CD4-positive, alpha-beta memory T cell (primary cell): ENCODE measurements at regions of chr6 and their contacts with region 1.

Region 1: GRCh38 chr6:110981202-110981600 is 637 bp upstream of the RPF2 start:
- DNase-seq: peak in 2 of 5 donors; percentile 1 to 29
- H3K4me3 ChIP-seq: peak overlapping the region; percentile 20 to 95
- H3K4me3 Mint-ChIP-seq: peak overlapping the region; percentile 93 to 99 (median 98)
- H3K27ac ChIP-seq: peak overlapping the region; percentile 86
- H3K27ac Mint-ChIP-seq: peak overlapping the region; percentile 99 to 100 (median 100)
- H3K4me1 ChIP-seq: peaks cover 17% of the 10 kb centered on the region
- H3K4me1 Mint-ChIP-seq: peaks cover 28 to 49% (median 30%) of the 10 kb centered on the region in 4 donors
- H3K27me3 ChIP-seq: no peaks in the 10 kb centered on the region
- H3K27me3 Mint-ChIP-seq: no peaks in the 10 kb centered on the region

Region 2: DNA sequence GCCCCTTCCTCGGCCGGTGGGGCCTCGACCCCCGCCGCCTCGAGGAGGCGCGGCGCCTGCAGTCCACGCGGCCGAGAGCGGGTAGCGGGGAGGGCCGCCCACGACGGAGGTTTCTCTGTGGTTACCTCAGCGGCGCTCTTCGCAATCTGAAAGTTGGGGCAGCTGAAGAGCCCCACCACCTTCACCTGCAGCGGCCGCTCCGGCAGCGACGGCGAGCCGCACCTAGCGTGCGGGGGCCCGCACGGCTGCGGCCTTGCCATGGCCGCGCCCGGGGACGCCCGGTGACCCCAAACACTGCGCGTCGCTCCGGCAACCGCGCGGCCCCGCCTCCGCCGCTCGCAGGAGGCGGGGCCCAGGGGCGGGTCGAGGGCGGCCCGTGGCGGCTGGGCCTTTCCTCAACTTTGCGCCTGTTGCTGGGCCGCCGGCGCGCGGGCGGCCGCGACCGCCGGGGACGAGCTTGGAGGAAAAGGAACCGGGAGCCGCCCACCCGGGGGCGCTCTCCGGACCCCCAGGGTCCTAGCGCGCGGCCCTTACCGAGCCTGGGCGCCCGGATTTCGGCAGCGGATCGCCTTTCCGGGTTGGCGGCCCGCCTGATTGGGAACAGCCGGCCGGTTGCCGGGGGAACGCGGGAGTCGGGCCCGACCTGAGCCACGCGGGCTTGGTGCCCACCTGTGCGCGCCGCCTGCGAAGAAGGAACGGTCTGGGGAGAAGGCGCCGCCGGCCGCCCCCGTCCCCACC is 1540.7 kb before region 1 on chr6 and contains the starts of genes PPIL6 and SMPD2:
- CTCF ChIA-PET with region 1: no interaction called
- POLR2A ChIA-PET with region 1: no interaction called
- intact Hi-C with region 1: loop called (anchors 5 kb)
- DNase-seq: peak; percentile 77 to 84 (median 80)
- H3K4me3 ChIP-seq: peak within 1 kb of the TSS; percentile 69 to 82
- H3K4me3 Mint-ChIP-seq: peak within 1 kb of the TSS; percentile 91 to 98 (median 94)
- H3K27ac ChIP-seq: peak within 1 kb of the TSS; percentile 89
- H3K27ac Mint-ChIP-seq: peak within 1 kb of the TSS; percentile 96 to 98 (median 97)
- H3K4me1 ChIP-seq: peaks cover 25% of the 10 kb centered on the region
- H3K4me1 Mint-ChIP-seq: peaks cover 15 to 32% (median 21%) of the 10 kb centered on the region in 4 donors
- H3K27me3 ChIP-seq: no peaks in the 10 kb centered on the region
- H3K27me3 Mint-ChIP-seq: no peaks in the 10 kb centered on the region
- total RNA-seq, gene PPIL6: 0.39 to 0.52 TPM
- total RNA-seq, gene SMPD2: 21.7 to 23.6 TPM

Region 3: GRCh38 chr6:110179401-110180227 is 801.6 kb before region 1 on chr6 and contains the start of gene WASF1:
- CTCF ChIA-PET with region 1: no interaction called
- POLR2A ChIA-PET with region 1: interaction called, 5 read pairs
- intact Hi-C with region 1: loop called (anchors 1 kb)
- DNase-seq: peak; percentile 90 to 93 (median 92)
- H3K4me3 ChIP-seq: peak within 1 kb of the TSS; percentile 77 to 92
- H3K4me3 Mint-ChIP-seq: peak within 1 kb of the TSS; percentile 82 to 92 (median 86)
- H3K27ac ChIP-seq: peak within 1 kb of the TSS; percentile 88
- H3K27ac Mint-ChIP-seq: peak within 1 kb of the TSS; percentile 24 to 90 (median 64)
- H3K4me1 ChIP-seq: peaks cover 46% of the 10 kb centered on the region
- H3K4me1 Mint-ChIP-seq: peaks cover 5 to 7% (median 6%) of the 10 kb centered on the region in 4 donors
- H3K27me3 ChIP-seq: no peaks in the 10 kb centered on the region
- H3K27me3 Mint-ChIP-seq: peaks cover 4 to 5% of the 10 kb centered on the region in 2 donors
- total RNA-seq, gene WASF1: 0.39 to 0.70 TPM

Region 4: DNA sequence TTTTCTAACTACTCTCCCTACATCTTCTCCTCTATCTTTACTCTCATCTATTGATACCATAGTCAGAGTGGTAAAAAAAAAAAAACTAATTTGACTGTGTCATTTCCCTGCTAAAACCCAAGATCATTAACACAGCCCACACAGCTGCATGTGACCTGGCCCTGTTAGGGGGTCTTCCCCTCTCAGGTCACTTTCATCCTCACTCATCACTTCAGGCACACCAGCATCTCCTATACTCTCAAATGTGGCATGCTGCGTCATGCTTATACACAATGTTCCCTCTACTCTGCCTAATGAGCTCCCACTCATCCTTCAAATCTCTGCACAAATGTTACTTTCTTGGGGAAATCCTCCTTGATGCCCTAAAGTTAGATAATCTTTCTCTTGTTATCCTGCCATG is 252.7 kb before region 1 on chr6:
- CTCF ChIA-PET with region 1: no interaction called
- POLR2A ChIA-PET with region 1: no interaction called
- intact Hi-C with region 1: no loop called
- DNase-seq: no peak
- H3K4me3 ChIP-seq: no peak overlapping the region
- H3K4me3 Mint-ChIP-seq: no peak overlapping the region
- H3K27ac ChIP-seq: no peak overlapping the region
- H3K27ac Mint-ChIP-seq: peak overlapping the region in 1 of 7 donors; percentile 53
- H3K4me1 ChIP-seq: no peaks in the 10 kb centered on the region
- H3K4me1 Mint-ChIP-seq: peaks cover 0 to 2% (median 0%) of the 10 kb centered on the region in 4 donors
- H3K27me3 ChIP-seq: no peaks in the 10 kb centered on the region
- H3K27me3 Mint-ChIP-seq: no peaks in the 10 kb centered on the region

Region 5: GRCh38 chr6:110958329-110959192 is 22.6 kb before region 1 on chr6 and contains the start of gene GTF3C6:
- CTCF ChIA-PET with region 1: interaction called, 11 read pairs
- POLR2A ChIA-PET with region 1: interaction called, 41 read pairs
- intact Hi-C with region 1: loop called (anchors 1 kb)
- DNase-seq: peak; percentile 90 to 94 (median 92)
- H3K4me3 ChIP-seq: peak within 1 kb of the TSS; percentile 69 to 94
- H3K4me3 Mint-ChIP-seq: peak within 1 kb of the TSS; percentile 95 to 99 (median 98)
- H3K27ac ChIP-seq: peak within 1 kb of the TSS; percentile 82
- H3K27ac Mint-ChIP-seq: peak within 1 kb of the TSS; percentile 91 to 99 (median 98)
- H3K4me1 ChIP-seq: peaks cover 20% of the 10 kb centered on the region
- H3K4me1 Mint-ChIP-seq: peaks cover 11 to 26% (median 17%) of the 10 kb centered on the region in 4 donors
- H3K27me3 ChIP-seq: no peaks in the 10 kb centered on the region
- H3K27me3 Mint-ChIP-seq: no peaks in the 10 kb centered on the region
- total RNA-seq, gene GTF3C6: 28.9 to 35.7 TPM

Region 6: DNA sequence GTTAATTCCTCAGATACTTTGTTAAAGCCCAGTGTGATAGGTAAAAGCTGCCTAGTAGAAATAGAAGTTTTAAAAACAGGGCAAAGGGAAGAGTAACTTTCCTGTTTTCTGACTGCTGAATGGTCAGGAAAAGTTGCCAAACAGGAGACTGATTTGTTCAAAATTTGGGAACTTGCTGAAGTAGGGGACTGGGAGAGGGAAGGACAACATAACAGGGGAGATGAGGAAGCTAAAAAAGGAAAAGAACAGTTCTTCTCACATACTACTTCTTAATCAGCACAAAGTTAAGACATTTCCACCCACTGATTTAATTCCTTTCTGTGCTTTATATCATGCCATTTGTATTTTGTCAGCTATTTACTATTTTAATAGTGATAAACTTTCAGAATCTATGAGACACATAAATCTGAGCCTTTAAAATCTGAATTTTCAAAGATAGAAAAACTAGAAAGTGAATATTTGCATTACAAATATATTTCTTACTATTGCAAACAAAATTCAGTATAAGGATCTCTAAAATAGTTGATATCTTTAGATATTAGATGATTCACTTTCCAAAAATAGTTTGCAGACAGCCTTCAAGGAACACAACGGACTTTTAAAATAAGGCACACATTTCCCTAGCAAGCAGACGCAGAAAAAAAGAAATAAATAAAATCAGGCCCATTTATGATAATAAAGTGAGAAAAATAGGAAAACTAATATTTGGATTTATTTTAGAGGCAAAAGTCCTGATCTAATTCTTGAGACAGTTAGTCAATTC is 69.2 kb after region 1 on chr6:
- CTCF ChIA-PET with region 1: no interaction called
- POLR2A ChIA-PET with region 1: no interaction called
- intact Hi-C with region 1: no loop called
- DNase-seq: no peak
- H3K4me3 ChIP-seq: no peak overlapping the region
- H3K4me3 Mint-ChIP-seq: no peak overlapping the region
- H3K27ac ChIP-seq: no peak overlapping the region
- H3K27ac Mint-ChIP-seq: peak overlapping the region in 1 of 7 donors; percentile 38
- H3K4me1 ChIP-seq: no peaks in the 10 kb centered on the region
- H3K4me1 Mint-ChIP-seq: no peaks in the 10 kb centered on the region
- H3K27me3 ChIP-seq: no peaks in the 10 kb centered on the region
- H3K27me3 Mint-ChIP-seq: no peaks in the 10 kb centered on the region

Region 7: GRCh38 chr6:111087106-111087835 is 106.1 kb after region 1 on chr6 and contains the start of gene SLC16A10:
- CTCF ChIA-PET with region 1: no interaction called
- POLR2A ChIA-PET with region 1: interaction called, 3 read pairs
- intact Hi-C with region 1: loop called (anchors 2 kb)
- DNase-seq: peak; percentile 75 to 82 (median 79)
- H3K4me3 ChIP-seq: peak within 1 kb of the TSS; percentile 62 to 74
- H3K4me3 Mint-ChIP-seq: peak within 1 kb of the TSS; percentile 88 to 99 (median 93)
- H3K27ac ChIP-seq: peak within 1 kb of the TSS; percentile 47
- H3K27ac Mint-ChIP-seq: peak within 1 kb of the TSS; percentile 77 to 92 (median 90)
- H3K4me1 ChIP-seq: peaks cover 22% of the 10 kb centered on the region
- H3K4me1 Mint-ChIP-seq: peaks cover 21 to 37% (median 26%) of the 10 kb centered on the region in 4 donors
- H3K27me3 ChIP-seq: no peaks in the 10 kb centered on the region
- H3K27me3 Mint-ChIP-seq: peaks cover 7 to 15% of the 10 kb centered on the region in 2 donors
- total RNA-seq, gene SLC16A10: 9.8 to 11.2 TPM

Region 8: GRCh38 chr6:111148110-111148873 is 167.1 kb after region 1 on chr6:
- CTCF ChIA-PET with region 1: no interaction called
- POLR2A ChIA-PET with region 1: no interaction called
- intact Hi-C with region 1: no loop called
- DNase-seq: no peak
- H3K4me3 ChIP-seq: no peak overlapping the region
- H3K4me3 Mint-ChIP-seq: no peak overlapping the region
- H3K27ac ChIP-seq: no peak overlapping the region
- H3K27ac Mint-ChIP-seq: no peak overlapping the region
- H3K4me1 ChIP-seq: no peaks in the 10 kb centered on the region
- H3K4me1 Mint-ChIP-seq: peaks cover 0 to 4% (median 2%) of the 10 kb centered on the region in 4 donors
- H3K27me3 ChIP-seq: no peaks in the 10 kb centered on the region
- H3K27me3 Mint-ChIP-seq: no peaks in the 10 kb centered on the region